Left colon (tissue), 2 donors: ENCODE measurements at regions of chr17 and their contacts with region 1.

Region 1: DNA sequence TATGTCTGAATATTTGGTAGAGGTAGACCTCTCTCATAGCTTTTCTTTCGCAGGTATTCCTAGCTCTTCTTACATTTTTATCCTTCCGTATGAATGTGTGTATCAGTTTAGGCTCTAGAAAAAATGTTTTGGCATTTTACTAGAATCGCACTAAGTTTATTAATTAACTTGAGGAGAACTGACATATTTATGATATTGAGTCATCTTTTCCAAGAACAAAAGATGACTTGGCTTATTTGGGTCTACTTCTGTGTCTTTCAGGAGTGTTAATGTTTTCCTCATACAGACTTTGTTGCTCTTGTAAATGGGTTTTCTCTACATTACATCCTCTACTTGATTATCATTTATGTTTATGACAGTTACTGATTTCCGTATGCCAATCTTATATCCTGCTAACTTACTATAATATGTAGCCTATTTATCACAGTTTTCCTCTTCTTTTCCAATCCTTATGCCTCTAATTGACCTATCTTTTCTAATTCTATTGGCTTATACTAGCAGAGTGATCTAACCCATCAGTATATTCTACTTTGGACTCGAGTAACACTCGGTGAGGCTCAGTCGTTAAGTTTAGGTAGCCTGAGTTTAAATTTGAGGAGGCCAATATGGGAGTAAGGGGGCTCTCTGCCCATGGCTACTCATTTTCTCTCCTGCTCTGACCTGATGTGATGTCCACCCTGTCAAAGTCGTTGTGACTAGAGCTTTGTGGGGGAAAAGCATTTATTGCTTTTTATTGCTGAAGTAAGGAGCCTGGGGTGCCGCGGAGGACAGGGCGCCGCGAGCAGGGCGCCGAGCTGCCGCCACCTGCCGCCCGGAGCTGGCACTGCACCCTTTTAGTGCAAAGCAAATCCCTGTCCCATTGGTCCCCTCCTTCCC is 20.0 kb downstream of the ST6GALNAC1 start:
- DNase-seq: peak; percentile 58 to 83
- ATAC-seq: peak; percentile 69

Region 2: DNA sequence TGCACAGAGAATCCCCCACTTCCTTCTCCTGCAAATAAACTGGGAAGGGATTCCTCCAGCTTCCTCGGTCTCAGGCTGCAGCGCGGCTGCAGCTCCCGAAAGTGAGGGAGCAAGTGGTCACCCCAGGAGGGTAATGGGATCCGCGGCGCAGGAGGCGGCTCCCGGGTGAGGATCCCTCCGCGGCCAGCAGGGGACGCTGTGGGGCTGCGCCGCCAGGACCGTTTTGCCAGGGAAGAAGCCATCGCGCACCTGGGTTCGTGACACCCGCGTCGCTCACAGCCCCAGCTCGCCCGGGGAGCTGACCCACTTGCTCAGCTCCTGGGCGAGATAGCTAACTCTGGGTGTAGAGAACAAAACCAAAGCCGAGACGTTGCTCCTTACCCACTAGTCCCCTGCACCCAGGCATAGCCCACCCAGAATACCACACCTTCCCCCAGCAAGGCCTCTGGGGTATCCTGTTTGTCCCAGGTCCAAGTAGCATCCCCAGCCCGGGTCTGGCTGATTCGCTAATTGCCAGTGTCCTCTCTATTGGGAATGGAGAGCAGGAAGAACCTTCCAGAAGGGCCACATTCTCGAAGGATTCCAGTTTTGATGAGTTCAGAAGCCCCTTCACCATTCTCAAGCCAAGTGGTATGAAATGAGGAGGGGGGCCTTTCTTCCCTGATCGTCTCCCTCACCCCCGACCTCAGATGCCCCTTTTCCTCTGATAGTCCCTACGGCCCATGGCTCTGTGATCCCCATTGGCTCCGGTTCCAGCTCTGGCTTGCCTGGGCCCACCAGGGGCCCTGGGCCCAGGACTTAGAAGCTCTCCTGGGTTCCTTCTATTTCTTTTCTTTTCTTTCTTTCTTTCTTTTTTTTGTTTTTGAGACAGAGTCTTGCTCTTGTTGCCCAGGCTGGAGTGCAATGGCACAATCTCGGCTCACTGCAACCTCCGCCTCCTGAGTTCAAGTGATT is 100.1 kb before region 1 on chr17:
- intact Hi-C with region 1: loop called (anchors 5 kb)
- DNase-seq: peak in 1 of 2 donors; percentile 80
- ATAC-seq: peak; percentile 77

Region 3: GRCh38 chr17:76772842-76773525 is 149.5 kb after region 1 on chr17:
- intact Hi-C with region 1: no loop called
- DNase-seq: no peak
- ATAC-seq: no peak